ENCODE measurements at regions of chr13 and their contacts with region 1.

Region 1: DNA sequence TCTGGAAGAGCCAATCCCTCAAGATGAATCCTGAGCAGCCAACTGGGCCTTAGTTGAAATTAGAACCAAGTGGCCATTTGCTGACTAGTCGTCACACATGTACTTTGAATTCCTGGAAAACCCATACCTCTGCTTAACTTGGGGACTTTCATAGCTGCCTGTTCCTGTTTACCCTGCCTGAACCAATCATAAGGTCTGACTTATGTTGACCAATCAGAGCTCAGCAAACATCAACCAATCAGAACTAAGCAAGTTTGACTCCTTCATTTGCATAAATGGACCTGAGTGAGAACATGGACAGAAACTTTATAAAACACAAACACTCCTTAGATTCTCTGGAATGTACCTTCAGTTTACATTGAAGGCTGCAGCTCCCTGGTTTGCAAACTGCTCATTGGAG is 50.8 kb downstream of the LATS2 start:
- DNase-seq: no peak
- H3K4me3 ChIP-seq: no peak overlapping the region
- H3K27ac ChIP-seq: no peak overlapping the region
- H3K4me1 ChIP-seq: peaks cover 10% of the 10 kb centered on the region
- H3K27me3 ChIP-seq: no peaks in the 10 kb centered on the region
- CTCF ChIP-seq: no peak

Region 2: GRCh38 chr13:20311596-20311995 is 699.0 kb before region 1 on chr13:
- CTCF ChIA-PET with region 1: no interaction called
- dilution Hi-C with region 1: no loop called
- in situ Hi-C with region 1: no loop called
- intact Hi-C with region 1: no loop called
- DNase-seq: no peak
- H3K4me3 ChIP-seq: no peak overlapping the region
- H3K27ac ChIP-seq: no peak overlapping the region
- H3K4me1 ChIP-seq: no peaks in the 10 kb centered on the region
- H3K27me3 ChIP-seq: no peaks in the 10 kb centered on the region
- CTCF ChIP-seq: no peak

Region 3: DNA sequence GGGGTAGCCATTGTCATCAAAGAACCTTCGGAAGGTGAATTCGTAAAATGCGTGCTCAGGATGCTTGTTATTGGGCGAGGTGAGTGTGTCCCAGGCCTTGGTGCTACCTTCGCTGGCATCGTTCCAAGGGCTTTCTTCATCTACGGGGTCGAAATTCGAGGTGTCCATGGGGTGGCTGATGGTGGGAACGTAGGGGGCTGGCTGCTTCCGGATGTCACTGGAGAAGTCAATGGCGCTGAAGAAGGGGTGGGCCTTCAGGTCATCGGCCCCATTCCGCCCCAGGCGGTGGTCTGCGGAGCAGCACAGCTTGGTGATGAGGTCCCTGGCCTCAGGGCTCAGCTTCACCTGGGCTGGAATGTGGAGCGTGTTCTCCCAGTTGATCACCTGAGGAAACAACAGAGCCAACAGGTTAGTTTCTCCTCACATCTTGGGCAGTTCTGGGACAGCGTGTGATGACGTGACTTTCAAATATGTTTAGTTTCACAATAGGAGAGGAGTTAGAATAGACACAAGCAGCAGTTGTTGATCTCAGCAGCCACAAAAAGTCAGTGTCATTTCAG is 35.6 kb before region 1 on chr13:
- CTCF ChIA-PET with region 1: no interaction called
- dilution Hi-C with region 1: loop called (anchors 5 kb)
- in situ Hi-C with region 1: no loop called
- intact Hi-C with region 1: no loop called
- DNase-seq: no peak
- H3K4me3 ChIP-seq: no peak overlapping the region
- H3K27ac ChIP-seq: no peak overlapping the region
- H3K4me1 ChIP-seq: no peaks in the 10 kb centered on the region
- H3K27me3 ChIP-seq: no peaks in the 10 kb centered on the region
- CTCF ChIP-seq: no peak

Region 4: GRCh38 chr13:21176220-21176982 is 165.8 kb after region 1 on chr13 and contains the starts of genes MRPL57 and SKA3:
- CTCF ChIA-PET with region 1: no interaction called
- dilution Hi-C with region 1: no loop called
- in situ Hi-C with region 1: no loop called
- intact Hi-C with region 1: loop called (anchors 2 kb)
- DNase-seq: peak; percentile 94
- H3K4me3 ChIP-seq: peak within 1 kb of the TSS; percentile 86 to 95 (median 90)
- H3K27ac ChIP-seq: peak within 1 kb of the TSS; percentile 80
- H3K4me1 ChIP-seq: peaks cover 7% of the 10 kb centered on the region
- H3K27me3 ChIP-seq: no peaks in the 10 kb centered on the region
- CTCF ChIP-seq: no peak
- total RNA-seq, gene MRPL57: 14.5 to 18.8 TPM
- total RNA-seq, gene SKA3: 5.0 to 14.6 TPM

Measured in mammary epithelial cell (primary cell).